ENCODE measurements at regions of chr2 and their contacts with region 1.

Region 1: DNA sequence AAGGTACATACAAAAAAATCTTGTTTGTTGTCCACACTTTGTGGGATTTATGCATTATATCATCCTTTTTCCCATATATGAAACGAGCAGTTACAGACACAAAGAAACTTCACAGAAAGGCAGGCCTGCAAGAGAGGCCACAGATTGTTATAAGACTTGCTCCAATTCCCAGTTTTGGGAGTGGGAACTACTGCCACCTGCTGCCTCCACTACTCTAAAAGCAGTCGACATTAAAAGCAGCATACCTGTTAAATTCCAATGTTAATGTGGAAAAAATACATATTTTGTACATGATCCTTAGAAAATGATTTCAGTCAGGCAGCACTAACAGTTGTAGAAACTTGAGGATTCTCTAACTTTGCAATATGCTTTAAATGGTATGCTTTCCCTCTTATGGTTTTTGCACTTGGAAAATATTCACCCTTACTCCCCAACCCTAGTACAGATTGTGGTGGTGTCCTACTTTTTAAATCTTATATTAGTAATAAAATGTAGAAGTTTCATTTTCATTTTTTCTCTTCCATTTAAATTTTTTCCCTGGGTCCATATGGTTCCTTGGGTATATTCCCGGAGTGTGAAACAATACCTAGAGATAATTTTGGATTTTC is 37.9 kb downstream of the SLC38A11 start:
- DNase-seq: no peak
- H3K4me3 ChIP-seq: no peak overlapping the region
- H3K27ac ChIP-seq: no peak overlapping the region
- H3K4me1 ChIP-seq: peaks cover 5 to 32% (median 13%) of the 10 kb centered on the region in 3 donors
- H3K27me3 ChIP-seq: no peaks in the 10 kb centered on the region
- CTCF ChIP-seq: peak; percentile 11 to 75 (median 58)
- POLR2A ChIP-seq: no peak

Region 2: DNA sequence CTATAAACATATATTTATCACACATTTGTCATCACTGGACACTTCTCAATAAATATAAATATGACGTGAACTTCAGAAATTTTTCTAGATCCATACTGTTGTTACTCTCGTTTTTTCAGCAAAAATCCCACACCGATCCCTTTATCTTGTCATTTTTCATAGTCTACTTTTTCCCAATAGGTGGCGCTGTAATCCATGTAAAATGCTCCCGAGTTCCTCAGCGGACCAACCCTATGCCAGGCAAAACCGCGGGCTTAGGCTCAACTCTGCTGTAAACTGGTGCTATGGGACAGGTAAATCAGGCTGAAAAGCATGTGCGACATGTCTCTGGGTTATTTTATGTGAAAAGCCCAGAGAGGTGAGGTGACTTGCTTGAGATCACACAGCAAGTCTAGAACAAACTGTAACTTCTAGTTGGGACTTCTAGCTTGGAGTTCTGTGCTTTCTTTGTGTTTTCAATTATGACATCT is 179.8 kb before region 1 on chr2:
- intact Hi-C with region 1: loop called (anchors 10 kb)
- DNase-seq: no peak
- H3K4me3 ChIP-seq: no peak overlapping the region
- H3K27ac ChIP-seq: peak overlapping the region in 2 of 4 donors; percentile 1 to 31
- H3K4me1 ChIP-seq: peaks cover 6 to 46% (median 7%) of the 10 kb centered on the region in 3 donors
- H3K27me3 ChIP-seq: no peaks in the 10 kb centered on the region
- CTCF ChIP-seq: peak; percentile 59 to 82 (median 77)
- POLR2A ChIP-seq: no peak

Region 3: GRCh38 chr2:164841719-164842623 is 75.4 kb before region 1 on chr2 and contains the start of gene COBLL1:
- intact Hi-C with region 1: loop called (anchors 5 kb)
- DNase-seq: no peak
- H3K4me3 ChIP-seq: peak within 1 kb of the TSS; percentile 67 to 94 (median 81)
- H3K27ac ChIP-seq: peak within 1 kb of the TSS; percentile 95 to 98 (median 96)
- H3K4me1 ChIP-seq: peaks cover 9 to 64% (median 10%) of the 10 kb centered on the region in 3 donors
- H3K27me3 ChIP-seq: peaks cover 0 to 4% (median 0%) of the 10 kb centered on the region in 4 donors
- CTCF ChIP-seq: peak; percentile 80 to 97 (median 90)
- POLR2A ChIP-seq: peak in 3 of 4 donors; percentile 15 to 61 (median 47)
- total RNA-seq, gene COBLL1: 35.4 to 88.9 (median 71.4) TPM